ENCODE measurements at regions of chr14 and their contacts with region 1.

Region 1: DNA sequence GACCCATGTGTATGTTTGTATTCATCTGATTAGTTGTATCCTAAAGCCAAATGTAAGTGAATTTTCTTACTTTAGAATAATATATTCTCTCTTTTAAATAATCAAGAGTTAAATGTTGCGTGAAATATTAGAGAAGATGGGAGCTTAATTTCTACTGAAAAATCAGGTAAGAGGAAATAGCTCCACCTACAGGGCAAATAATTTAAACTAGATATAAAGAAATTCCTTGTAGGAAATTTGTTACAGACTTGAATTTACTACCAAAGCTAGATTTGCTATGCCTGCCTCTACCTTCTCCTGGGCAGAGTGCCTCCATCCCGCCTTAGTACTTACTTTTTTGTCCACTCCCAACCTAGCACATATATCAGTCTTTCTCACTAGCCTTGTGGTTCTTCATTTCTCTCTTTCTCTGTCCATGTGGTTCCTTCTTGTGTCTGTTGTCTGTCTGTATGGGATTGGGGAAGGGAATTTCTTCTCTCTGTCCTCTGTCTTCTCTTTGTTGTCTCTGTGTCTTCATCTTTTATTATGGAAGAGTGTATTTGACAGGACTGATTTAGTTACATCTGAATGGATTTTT is 44.7 kb downstream of the PALS1 start:
- DNase-seq: no peak
- H3K4me3 ChIP-seq: no peak overlapping the region
- H3K27ac ChIP-seq: no peak overlapping the region
- H3K4me1 ChIP-seq: no peaks in the 10 kb centered on the region
- H3K27me3 ChIP-seq: no peaks in the 10 kb centered on the region
- CTCF ChIP-seq: peak; percentile 46 to 64 (median 54)
- POLR2A ChIP-seq: no peak

Region 2: GRCh38 chr14:66624299-66624937 is 661.5 kb before region 1 on chr14:
- intact Hi-C with region 1: loop called (anchors 10 kb)
- DNase-seq: peak; percentile 15
- H3K4me3 ChIP-seq: no peak overlapping the region
- H3K27ac ChIP-seq: no peak overlapping the region
- H3K4me1 ChIP-seq: no peaks in the 10 kb centered on the region
- H3K27me3 ChIP-seq: no peaks in the 10 kb centered on the region
- CTCF ChIP-seq: peak in 2 of 4 experiments; percentile 34 to 36
- POLR2A ChIP-seq: no peak

Region 3: GRCh38 chr14:67166450-67166853 is 119.5 kb before region 1 on chr14:
- intact Hi-C with region 1: loop called (anchors 5 kb)
- DNase-seq: peak; percentile 13
- H3K4me3 ChIP-seq: no peak overlapping the region
- H3K27ac ChIP-seq: no peak overlapping the region
- H3K4me1 ChIP-seq: no peaks in the 10 kb centered on the region
- H3K27me3 ChIP-seq: no peaks in the 10 kb centered on the region
- CTCF ChIP-seq: peak; percentile 41 to 80 (median 73)
- POLR2A ChIP-seq: no peak

Region 4: DNA sequence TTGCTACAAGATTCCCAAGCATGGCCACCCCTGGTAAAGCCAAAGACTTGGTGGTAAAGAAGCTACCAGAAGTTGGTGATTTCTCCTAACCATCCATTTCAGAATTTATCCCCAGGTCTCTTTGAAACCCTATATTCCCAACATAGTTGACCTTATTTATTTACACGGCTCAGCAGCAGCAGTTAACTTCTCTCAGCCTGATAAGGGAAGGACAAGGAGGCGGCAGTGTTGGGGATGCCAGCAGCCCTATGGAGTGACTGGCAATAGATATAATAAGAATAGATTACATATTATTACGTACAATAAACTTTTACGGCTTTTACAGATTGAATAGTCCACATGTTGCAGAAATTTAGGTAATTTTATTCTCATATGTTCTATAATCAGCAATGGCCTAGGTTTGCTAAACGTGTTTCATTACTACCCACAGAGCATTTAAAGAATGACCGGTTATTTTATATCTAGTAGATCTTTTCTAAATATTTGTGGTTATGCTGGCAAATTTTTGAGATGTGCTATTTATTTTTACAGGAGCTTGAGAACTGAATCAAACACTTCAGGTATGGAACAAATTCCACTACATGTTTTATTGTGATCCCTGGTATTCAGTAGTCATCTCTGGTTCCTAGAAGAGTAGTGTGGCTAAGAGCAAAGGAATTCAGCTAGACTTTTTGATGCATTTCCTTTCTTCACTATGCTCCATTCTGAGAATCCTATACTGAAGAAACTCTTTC is 64.5 kb before region 1 on chr14:
- intact Hi-C with region 1: no loop called
- DNase-seq: no peak
- H3K4me3 ChIP-seq: no peak overlapping the region
- H3K27ac ChIP-seq: no peak overlapping the region
- H3K4me1 ChIP-seq: no peaks in the 10 kb centered on the region
- H3K27me3 ChIP-seq: no peaks in the 10 kb centered on the region
- CTCF ChIP-seq: no peak
- POLR2A ChIP-seq: no peak

Measured in prostate gland (tissue), 2 donors.